Astrocyte of the cerebellum (primary cell): ENCODE measurements at regions of chr5 and their contacts with region 1.

Region 1: DNA sequence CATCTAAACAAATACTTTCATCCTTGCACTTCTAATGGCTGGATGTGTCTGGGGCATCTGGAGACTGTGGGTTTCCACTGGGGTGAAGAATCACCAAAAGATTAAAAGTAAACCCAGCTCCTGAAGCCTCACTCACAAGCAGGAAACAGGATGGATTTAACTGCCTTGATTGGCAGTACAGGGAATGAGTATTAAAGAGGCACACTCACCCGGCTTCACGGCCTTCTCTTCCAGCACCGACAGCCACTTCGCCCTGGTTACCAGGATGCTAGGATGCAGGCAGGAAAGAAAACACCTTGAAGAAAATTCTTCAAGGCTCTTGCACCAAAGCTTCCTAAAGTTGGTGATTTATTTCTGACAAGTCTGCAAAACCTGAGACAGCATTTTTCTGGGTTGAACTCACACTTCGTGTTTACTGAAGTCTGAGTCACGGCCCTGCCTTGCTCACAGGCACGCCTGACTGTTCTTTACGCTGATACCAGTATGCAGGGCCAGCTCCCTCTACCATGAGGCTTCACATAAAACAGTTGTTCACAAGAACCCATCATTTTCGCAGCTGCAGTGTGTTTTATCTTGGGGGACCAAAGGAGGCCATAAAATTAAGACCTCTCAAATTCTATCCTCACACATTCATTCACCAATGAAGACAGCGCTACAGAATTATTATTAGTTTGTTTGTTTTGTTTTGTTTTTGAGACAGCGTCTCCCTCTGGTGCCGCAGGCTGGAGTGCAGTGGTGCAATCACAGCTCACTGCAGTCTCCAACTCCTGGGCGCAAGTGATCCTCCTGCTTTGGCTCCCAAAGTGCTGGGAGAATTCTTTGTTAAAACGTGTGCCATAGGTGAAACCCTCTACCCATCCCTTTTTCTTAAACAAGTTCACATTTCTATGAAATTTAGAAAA is 56.7 kb upstream of the ZNF354A start:
- DNase-seq: no peak
- H3K4me3 ChIP-seq: no peak overlapping the region
- CTCF ChIP-seq: no peak

Region 2: DNA sequence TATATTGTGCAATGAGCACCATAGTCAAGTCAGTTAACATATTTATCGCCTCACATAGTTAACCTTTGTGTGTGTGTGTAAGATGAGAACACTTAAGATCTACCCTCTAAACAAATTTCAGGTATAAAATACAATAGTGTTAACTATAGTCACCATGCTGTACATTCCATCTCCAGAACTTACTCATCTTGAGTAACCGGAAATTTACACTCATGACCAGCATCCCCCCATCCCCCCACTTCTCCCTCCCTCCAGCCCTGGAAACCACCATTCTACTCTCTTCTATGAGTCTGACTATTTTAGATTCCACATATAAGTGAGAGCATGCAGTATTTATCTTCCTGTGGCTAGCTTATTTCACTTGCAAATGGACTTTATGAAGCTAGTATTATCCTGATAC is 96.9 kb before region 1 on chr5:
- in situ Hi-C with region 1: no loop called
- DNase-seq: no peak
- H3K4me3 ChIP-seq: no peak overlapping the region
- CTCF ChIP-seq: no peak

Region 3: DNA sequence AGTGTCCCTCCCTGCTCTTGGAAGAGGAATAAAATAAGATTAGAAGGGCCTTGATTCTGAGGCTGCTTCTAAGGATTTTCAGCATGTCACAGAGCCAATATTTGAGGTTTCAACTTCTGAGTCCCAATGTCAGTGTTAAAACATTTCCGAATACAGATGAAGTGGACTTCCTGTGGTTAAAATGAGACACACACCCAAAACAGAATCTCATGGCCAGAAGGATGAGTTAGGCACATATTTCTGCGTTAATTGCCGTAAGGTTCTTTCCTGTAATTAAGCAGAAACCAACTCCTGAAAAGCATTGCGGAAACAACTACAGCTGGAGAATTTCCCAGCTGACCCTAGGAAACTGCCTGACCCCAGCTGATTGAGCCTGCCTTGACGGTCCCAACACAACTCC is 62.2 kb after region 1 on chr5:
- in situ Hi-C with region 1: loop called (anchors 10 kb)
- DNase-seq: no peak
- H3K4me3 ChIP-seq: no peak overlapping the region
- CTCF ChIP-seq: no peak